ENCODE measurements at regions of chr12 and their contacts with region 1.

Region 1: DNA sequence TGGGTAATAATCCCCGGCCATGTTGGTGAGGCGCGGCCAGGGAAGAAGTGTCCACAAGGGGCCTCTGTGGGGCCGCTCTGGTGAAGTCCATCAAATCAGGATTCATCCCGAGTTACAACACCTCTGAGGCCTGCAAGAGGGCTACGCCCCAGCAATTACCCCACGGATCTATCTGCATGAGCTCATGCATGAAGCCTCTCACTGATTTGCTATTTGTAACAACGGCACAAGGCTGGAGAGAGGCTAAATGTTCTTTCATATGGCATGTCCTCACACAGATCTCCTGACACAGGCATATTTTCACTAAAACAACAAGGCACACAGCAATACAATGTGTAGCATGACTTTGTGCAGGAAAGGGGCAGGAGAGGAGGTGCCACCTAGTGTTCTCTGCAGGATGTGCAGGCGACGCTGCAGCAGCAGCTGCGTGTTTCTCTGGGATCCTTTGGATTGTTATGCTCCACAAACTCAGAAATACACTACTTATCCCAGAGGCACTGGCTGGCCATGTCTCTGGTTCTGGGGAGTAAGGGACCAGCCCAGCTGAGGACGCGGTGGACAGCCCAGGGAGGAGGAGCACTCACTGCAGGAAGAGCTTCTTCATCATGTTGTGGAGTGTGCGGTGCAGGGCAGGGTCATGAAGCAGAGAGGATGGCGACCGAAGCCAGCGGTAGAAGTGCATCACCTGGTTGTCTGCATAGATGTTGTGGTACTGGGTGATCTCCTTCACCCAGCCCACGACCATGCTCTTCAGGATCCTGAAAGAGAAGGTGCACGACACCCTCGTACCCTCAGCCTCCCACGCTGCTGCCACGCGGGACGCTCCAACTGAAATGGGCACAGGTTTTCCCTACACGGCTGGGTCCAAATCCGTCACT is 20.2 kb downstream of the P2RX2 start:
- DNase-seq: peak; percentile 61
- H3K4me3 ChIP-seq: no peak overlapping the region
- H3K27ac ChIP-seq: no peak overlapping the region
- H3K4me1 ChIP-seq: no peaks in the 10 kb centered on the region
- H3K27me3 ChIP-seq: no peaks in the 10 kb centered on the region
- CTCF ChIP-seq: peak; percentile 86

Region 2: DNA sequence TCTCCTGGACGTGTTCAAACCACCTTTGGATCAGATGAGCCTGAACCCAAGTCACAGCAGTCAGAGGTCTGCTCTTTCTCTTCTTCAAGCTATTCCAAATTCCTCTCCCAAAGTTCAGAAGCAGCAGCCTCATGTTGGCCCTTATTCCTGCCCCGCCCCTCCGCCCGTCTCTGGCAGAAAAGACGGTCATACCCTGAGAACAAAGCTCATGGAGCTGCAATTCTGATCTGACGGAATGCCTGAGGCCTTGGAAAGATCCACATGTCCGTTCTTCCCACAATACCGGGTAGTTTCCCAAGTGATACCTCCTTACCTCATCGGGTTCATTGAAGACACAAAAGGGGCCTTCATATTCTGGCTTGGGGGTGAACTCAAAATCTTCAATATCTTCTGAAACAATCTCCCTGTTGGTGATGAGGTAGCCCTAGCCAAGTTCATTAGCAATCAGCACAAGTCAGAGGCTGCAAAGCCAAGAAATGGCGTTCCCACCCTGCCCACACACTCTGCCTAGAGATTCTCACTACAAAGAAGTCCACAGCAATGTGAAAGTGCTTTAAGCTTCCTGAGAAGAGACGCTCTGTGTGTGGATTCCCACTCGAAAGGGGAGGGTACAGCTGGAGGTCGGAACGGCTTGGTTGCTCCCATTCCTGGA is 37.1 kb after region 1 on chr12:
- CTCF ChIA-PET with region 1: no interaction called
- POLR2A ChIA-PET with region 1: no interaction called
- intact Hi-C with region 1: loop called (anchors 5 kb)
- DNase-seq: no peak
- H3K4me3 ChIP-seq: no peak overlapping the region
- H3K27ac ChIP-seq: no peak overlapping the region
- H3K4me1 ChIP-seq: no peaks in the 10 kb centered on the region
- H3K27me3 ChIP-seq: no peaks in the 10 kb centered on the region
- CTCF ChIP-seq: no peak

Measured in A673 (cell line).